Activated CD8-positive, alpha-beta T cell treated with anti-CD3 and anti-CD28 coated beads, Interleukin-2, amount 10 ng/mL, durations not matched to agents 7 days and 5 days (primary cell): ENCODE measurements at regions of chr3 and their contacts with region 1.

Region 1: GRCh38 chr3:195909644-195910508 is 1.5 kb upstream of the TNK2 start:
- DNase-seq: peak; percentile 90
- ATAC-seq: peak; percentile 64
- H3K4me3 Mint-ChIP-seq: peak overlapping the region; percentile 73
- H3K27ac Mint-ChIP-seq: peak overlapping the region; percentile 80
- H3K4me1 Mint-ChIP-seq: peaks cover 41% of the 10 kb centered on the region
- H3K27me3 Mint-ChIP-seq: no peaks in the 10 kb centered on the region

Region 2: GRCh38 chr3:195829897-195830254 is 80.0 kb before region 1 on chr3:
- CTCF ChIA-PET with region 1: no interaction called
- POLR2A ChIA-PET with region 1: no interaction called
- DNase-seq: no peak
- ATAC-seq: no peak
- H3K4me3 Mint-ChIP-seq: no peak overlapping the region
- H3K27ac Mint-ChIP-seq: no peak overlapping the region
- H3K4me1 Mint-ChIP-seq: no peaks in the 10 kb centered on the region
- H3K27me3 Mint-ChIP-seq: peaks cover 4% of the 10 kb centered on the region

Region 3: GRCh38 chr3:195863121-195864006 is 46.5 kb before region 1 on chr3:
- CTCF ChIA-PET with region 1: interaction called, 126 read pairs
- POLR2A ChIA-PET with region 1: interaction called, 3 read pairs
- DNase-seq: peak; percentile 70
- ATAC-seq: peak; percentile 72
- H3K4me3 Mint-ChIP-seq: no peak overlapping the region
- H3K27ac Mint-ChIP-seq: no peak overlapping the region
- H3K4me1 Mint-ChIP-seq: peaks cover 4% of the 10 kb centered on the region
- H3K27me3 Mint-ChIP-seq: no peaks in the 10 kb centered on the region

Region 4: DNA sequence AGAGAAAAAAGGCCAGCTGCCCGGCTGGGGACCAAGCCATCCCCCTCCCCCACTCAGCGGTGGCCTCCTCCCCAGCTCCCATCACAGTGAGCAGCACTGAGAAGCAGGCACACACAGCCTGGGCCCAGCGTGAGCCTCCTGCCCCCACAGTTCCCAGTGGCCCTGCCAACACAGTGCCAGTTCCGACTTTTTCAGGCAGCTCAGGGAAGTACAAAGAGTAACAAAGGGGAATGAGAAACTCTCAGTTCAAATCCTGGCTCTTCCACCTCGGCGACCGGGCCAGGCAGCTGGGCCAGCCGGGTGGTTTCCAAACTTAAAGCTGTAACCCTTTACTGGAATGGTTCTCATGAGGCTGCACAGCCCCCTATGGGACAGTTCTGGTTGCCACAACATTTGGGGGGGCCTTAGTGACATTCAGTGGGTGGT is 20.0 kb before region 1 on chr3:
- CTCF ChIA-PET with region 1: interaction called, 144 read pairs
- POLR2A ChIA-PET with region 1: interaction called, 160 read pairs
- DNase-seq: no peak
- ATAC-seq: no peak
- H3K4me3 Mint-ChIP-seq: no peak overlapping the region
- H3K27ac Mint-ChIP-seq: no peak overlapping the region
- H3K4me1 Mint-ChIP-seq: peaks cover 21% of the 10 kb centered on the region
- H3K27me3 Mint-ChIP-seq: no peaks in the 10 kb centered on the region

Region 5: GRCh38 chr3:196020373-196020772 is 110.5 kb after region 1 on chr3:
- CTCF ChIA-PET with region 1: no interaction called
- POLR2A ChIA-PET with region 1: no interaction called
- DNase-seq: no peak
- ATAC-seq: no peak
- H3K4me3 Mint-ChIP-seq: no peak overlapping the region
- H3K27ac Mint-ChIP-seq: no peak overlapping the region
- H3K4me1 Mint-ChIP-seq: no peaks in the 10 kb centered on the region
- H3K27me3 Mint-ChIP-seq: peaks cover 21% of the 10 kb centered on the region